HAP-1 (cell line): ENCODE measurements at regions of chr5 and their contacts with region 1.

Region 1: DNA sequence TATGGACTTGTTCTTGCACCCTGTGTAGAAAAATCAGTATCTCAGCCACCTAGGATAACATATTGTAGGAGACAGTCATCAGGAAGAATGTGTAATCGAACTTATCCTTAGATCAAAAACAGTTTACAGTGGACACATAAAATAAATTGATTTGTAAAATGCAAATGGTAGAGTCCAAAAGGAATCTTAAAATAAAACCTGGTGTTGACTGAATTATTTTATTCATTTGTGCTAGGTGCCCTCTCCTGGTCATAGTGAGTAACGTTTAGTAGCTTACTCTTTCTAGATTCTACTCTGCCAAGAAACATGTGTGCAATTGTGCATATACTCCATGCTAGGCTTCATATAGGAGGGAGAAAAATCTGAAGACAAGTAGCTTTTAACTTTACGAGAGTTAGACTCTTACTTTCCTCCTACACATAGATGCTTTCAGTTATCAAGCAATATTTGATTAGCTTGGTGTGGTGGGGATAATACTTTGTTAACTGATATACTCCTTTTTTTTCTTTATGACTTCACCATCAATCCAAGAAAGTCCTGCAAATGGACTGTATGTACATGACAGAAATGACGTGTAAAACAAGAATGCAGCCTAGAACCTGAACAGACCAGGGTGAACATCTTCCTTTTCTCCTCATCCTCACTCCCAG is 23.7 kb upstream of the LOX start:
- DNase-seq: peak in 1 of 2 experiments; percentile 47
- H3K4me3 ChIP-seq: no peak overlapping the region
- H3K4me1 ChIP-seq: peaks cover 19% of the 10 kb centered on the region
- H3K27me3 ChIP-seq: 0 out of 2 replicates have a peak, but pooled peaks cover 3% of the 10 kb centered on the region

Region 2: GRCh38 chr5:121968910-121969607 is 132.7 kb before region 1 on chr5:
- in situ Hi-C with region 1: loop called (anchors 10 kb)
- DNase-seq: no peak
- H3K4me3 ChIP-seq: no peak overlapping the region
- H3K4me1 ChIP-seq: peaks cover 17% of the 10 kb centered on the region
- H3K27me3 ChIP-seq: no peaks in the 10 kb centered on the region